Calu3 (cell line): ENCODE measurements at regions of chr22 and their contacts with region 1.

Region 1: DNA sequence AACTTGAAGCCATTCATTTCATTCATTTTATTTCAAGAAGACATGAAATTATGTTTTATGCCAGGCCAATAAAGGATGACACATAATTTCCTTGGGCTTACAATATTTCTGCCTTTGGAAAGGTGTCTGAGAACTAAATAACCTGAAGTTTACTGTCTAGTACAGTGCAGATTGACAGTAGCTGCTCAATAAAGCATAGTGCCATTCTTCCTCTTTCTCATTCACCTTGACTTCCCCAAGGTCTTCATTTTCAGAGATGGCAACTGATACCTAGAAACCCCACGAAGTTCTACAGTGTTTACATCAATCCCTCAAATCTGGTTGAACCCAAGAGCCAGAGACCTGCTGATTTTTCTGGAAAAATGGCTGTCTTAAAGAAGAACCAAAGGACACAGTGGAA is 144.3 kb upstream of the SYN3 start:
- DNase-seq: no peak
- H3K4me3 Mint-ChIP-seq: no peak overlapping the region
- H3K27ac Mint-ChIP-seq: no peak overlapping the region
- H3K4me1 Mint-ChIP-seq: peaks cover 8% of the 10 kb centered on the region
- H3K27me3 Mint-ChIP-seq: peaks cover 73% of the 10 kb centered on the region
- CTCF ChIP-seq: no peak

Region 2: DNA sequence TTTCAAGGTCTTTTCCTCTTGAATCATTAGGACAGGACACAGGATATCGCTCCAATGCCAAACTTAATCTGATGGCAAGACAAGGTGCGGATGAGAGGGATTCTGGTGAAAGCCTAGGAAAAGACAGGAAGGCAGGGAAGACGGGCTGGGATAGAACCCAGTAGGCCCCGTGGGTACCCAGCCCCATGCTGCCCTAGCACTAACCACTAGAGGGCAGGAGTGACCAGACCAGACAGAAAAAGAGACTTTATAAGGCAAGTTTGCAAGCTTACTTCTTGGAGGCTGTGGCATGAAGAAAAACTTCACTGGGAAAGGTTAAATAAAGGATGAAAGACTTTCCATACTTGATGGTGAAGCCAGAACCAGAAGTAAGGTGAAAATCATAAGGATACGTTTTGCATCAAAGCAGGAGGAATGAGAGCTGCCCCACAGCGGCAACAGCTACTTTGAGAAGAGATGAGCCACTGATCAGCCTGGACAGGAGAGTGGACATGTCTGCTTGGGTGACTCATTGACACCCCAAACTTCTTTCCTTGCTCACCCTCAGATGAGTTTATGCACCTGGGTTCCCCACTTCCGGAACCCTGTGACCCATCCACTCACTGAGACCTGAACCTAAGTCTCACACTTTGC is 184.1 kb before region 1 on chr22:
- CTCF ChIA-PET with region 1: interaction called, 8 read pairs
- intact Hi-C with region 1: loop called (anchors 2 kb)
- DNase-seq: peak; percentile 77
- H3K4me3 Mint-ChIP-seq: no peak overlapping the region
- H3K27ac Mint-ChIP-seq: no peak overlapping the region
- H3K4me1 Mint-ChIP-seq: no peaks in the 10 kb centered on the region
- H3K27me3 Mint-ChIP-seq: peaks cover 29% of the 10 kb centered on the region
- CTCF ChIP-seq: peak; percentile 87

Region 3: DNA sequence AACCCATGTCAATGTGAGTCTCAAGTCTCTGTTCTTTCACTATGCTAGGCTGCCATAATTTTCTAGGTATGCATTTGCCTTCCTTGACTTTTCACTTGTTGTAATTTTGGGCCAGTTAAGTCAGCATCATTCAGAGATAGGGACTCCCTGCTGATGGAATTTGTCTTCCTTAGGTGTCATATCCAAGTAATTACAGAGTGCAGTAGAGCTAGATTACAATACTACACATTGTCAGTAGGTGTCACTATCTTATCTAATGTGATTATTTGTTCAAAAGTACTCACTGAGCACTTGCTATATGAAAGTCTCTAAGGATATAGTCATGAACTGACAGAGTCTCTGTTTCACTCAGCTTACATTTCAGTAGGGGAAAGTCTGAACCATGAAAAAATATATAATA is 119.2 kb before region 1 on chr22:
- CTCF ChIA-PET with region 1: no interaction called
- intact Hi-C with region 1: loop called (anchors 1 kb)
- DNase-seq: no peak
- H3K4me3 Mint-ChIP-seq: no peak overlapping the region
- H3K27ac Mint-ChIP-seq: no peak overlapping the region
- H3K4me1 Mint-ChIP-seq: no peaks in the 10 kb centered on the region
- H3K27me3 Mint-ChIP-seq: no peaks in the 10 kb centered on the region
- CTCF ChIP-seq: no peak

Region 4: GRCh38 chr22:34301569-34301968 is 1099.1 kb after region 1 on chr22:
- CTCF ChIA-PET with region 1: no interaction called
- intact Hi-C with region 1: no loop called
- DNase-seq: no peak
- H3K4me3 Mint-ChIP-seq: no peak overlapping the region
- H3K27ac Mint-ChIP-seq: no peak overlapping the region
- H3K4me1 Mint-ChIP-seq: no peaks in the 10 kb centered on the region
- H3K27me3 Mint-ChIP-seq: no peaks in the 10 kb centered on the region
- CTCF ChIP-seq: no peak